GM10248 (cell line): ENCODE measurements at regions of chr17 and their contacts with region 1.

Region 1: GRCh38 chr17:81733507-81734404 is 21.7 kb downstream of the SLC25A10 start:
- DNase-seq: peak; percentile 93
- CTCF ChIP-seq: peak; percentile 96

Region 2: GRCh38 chr17:81666342-81667191 is 67.2 kb before region 1 on chr17 and contains the starts of genes CCDC137 and OXLD1:
- CTCF ChIA-PET with region 1: no interaction called
- POLR2A ChIA-PET with region 1: no interaction called
- DNase-seq: peak; percentile 99
- CTCF ChIP-seq: no peak

Region 3: GRCh38 chr17:81808778-81809555 is 75.2 kb after region 1 on chr17:
- CTCF ChIA-PET with region 1: interaction called, 16 read pairs
- POLR2A ChIA-PET with region 1: no interaction called
- DNase-seq: no peak
- CTCF ChIP-seq: peak; percentile 29

Region 4: DNA sequence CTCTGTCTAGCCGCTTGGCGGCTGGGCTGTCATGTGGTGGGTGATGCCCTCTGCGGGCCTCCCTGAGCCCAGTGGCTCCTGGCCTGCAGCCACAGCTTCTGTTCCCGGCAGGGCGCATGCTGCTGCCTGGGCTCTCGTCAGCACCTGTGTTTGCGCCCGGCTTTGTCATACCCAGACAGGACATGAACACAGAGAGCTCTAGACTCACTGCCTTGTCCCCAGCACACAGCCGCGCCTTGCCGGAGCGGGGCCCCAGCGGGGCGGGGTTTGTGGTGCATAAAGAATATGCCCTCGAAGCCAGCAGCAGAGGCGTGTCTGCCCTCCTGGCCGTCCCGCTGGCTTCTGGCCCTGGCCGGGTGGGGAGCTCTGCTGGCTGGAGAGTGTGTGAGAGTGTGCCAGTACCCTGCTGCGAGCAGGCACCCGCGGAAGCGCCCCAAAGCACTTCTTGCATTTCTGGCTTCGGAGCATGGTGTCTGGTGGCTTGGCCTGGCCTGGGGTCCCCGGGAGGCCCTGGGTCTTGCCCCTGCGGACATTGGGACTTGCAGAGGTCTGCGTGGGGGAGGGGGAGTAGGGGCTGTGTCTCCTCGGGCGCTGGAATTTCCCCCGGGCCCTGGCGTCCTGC is 258.0 kb after region 1 on chr17:
- CTCF ChIA-PET with region 1: no interaction called
- POLR2A ChIA-PET with region 1: no interaction called
- DNase-seq: no peak
- CTCF ChIP-seq: no peak